PC-9 (cell line): ENCODE measurements at regions of chr1 and their contacts with region 1.

Region 1: DNA sequence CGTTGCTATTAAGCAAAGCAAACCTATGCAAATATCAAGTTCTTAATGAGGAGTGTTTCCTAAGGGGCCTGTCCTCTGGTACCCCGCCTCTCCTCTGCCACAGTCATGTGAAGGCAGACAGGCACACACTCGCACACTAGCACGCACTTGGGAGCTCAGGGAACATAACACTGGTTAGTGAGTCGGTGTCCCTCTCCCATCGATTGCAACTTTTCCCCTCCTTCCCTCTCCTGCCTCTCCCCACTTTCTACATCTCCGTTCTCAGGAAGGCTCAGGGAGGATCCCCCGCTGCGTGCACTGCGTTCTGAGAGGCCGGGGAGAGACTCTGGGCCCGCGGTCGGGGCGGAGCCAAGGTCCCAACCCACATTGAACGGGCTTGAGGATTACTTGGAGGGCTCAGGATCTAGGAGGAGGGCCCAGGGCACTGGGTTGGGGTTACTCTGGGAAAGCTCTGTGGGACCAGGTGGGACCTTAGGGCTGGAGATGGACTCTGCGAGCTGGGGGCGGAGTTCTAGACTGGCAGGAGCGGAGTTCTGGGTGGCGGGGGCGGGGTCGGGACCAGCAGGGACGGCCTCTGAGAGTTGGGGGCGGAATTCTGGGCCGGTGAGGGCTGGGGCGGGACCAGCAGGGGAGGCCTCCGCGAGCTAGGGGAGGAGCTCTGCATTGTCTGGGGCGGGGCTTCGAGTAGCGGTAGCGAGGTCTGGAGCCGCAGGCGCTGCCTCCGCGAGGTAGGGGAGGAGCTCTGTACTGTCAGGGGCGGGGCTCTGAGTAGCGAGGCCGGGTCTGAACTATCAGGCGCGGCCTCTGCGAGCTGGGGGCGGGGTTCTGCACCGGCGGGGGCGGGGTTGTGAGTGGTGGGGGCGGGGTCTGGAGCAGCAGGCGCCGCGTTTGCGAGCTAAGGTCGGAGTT is 533 bp upstream of the LEPR start:
- DNase-seq: peak; percentile 88 to 99
- H3K4me3 ChIP-seq: peak overlapping the region; percentile 59
- H3K27ac ChIP-seq: peak overlapping the region; percentile 90
- H3K4me1 ChIP-seq: peaks cover 55% of the 10 kb centered on the region
- H3K27me3 ChIP-seq: no peaks in the 10 kb centered on the region
- CTCF ChIP-seq: no peak

Region 2: GRCh38 chr1:64898107-64898845 is 521.7 kb before region 1 on chr1:
- CTCF ChIA-PET with region 1: no interaction called
- POLR2A ChIA-PET with region 1: interaction called, 3 read pairs
- intact Hi-C with region 1: loop called (anchors 5 kb)
- DNase-seq: peak; percentile 86 to 99
- H3K4me3 ChIP-seq: no peak overlapping the region; the same call in 1 of the 2 replicates
- H3K27ac ChIP-seq: peak overlapping the region; percentile 95
- H3K4me1 ChIP-seq: peaks cover 46% of the 10 kb centered on the region
- H3K27me3 ChIP-seq: no peaks in the 10 kb centered on the region
- CTCF ChIP-seq: no peak

Region 3: DNA sequence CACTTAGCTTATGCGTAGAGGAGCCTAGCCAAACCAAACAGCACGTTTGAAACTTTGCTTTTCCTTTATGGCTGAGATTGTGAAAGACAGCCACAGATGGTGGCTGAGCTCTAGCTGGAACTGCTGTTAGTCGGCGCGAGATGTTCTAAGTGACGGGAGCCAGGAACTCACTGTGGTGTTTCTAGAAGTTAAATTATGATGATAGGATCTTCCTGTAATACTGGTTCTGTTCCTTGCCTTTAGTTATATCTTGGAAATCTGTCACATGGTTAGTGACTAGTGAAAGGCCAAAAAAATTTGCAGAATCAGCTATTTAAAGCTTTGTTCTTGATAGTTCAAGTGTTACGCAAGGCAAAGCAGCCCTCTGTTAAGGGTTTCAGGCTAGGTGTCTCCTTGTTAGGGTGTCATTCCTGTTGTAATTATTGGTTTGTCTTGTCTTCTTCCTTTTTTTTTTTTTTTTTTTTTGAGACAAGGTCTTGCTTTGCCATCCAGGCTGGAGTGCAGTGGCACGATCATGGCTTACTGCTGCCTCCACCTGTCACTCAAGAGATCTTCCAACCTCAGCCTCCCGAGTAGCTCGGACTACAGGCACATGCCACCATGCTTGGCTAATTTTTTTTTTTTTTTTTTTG is 249.3 kb before region 1 on chr1:
- CTCF ChIA-PET with region 1: no interaction called
- POLR2A ChIA-PET with region 1: no interaction called
- intact Hi-C with region 1: no loop called
- DNase-seq: peak; percentile 48 to 87
- H3K4me3 ChIP-seq: no peak overlapping the region
- H3K27ac ChIP-seq: peak overlapping the region; percentile 21; the same call in 1 of the 2 replicates
- H3K4me1 ChIP-seq: peaks cover 45% of the 10 kb centered on the region
- H3K27me3 ChIP-seq: no peaks in the 10 kb centered on the region
- CTCF ChIP-seq: no peak

Region 4: GRCh38 chr1:65235867-65236805 is 183.8 kb before region 1 on chr1:
- CTCF ChIA-PET with region 1: interaction called, 3 read pairs
- POLR2A ChIA-PET with region 1: interaction called, 44 read pairs
- intact Hi-C with region 1: no loop called
- DNase-seq: no peak
- H3K4me3 ChIP-seq: no peak overlapping the region
- H3K27ac ChIP-seq: no peak overlapping the region
- H3K4me1 ChIP-seq: no peaks in the 10 kb centered on the region
- H3K27me3 ChIP-seq: no peaks in the 10 kb centered on the region
- CTCF ChIP-seq: peak; percentile 87

Region 5: GRCh38 chr1:65309304-65310077 is 110.4 kb before region 1 on chr1 and contains the start of gene DNAJC6:
- CTCF ChIA-PET with region 1: interaction called, 4 read pairs
- POLR2A ChIA-PET with region 1: no interaction called
- intact Hi-C with region 1: loop called (anchors 5 kb)
- DNase-seq: peak; percentile 53 to 80
- H3K4me3 ChIP-seq: peak within 1 kb of the TSS; percentile 58
- H3K27ac ChIP-seq: no peak within 1 kb of the TSS
- H3K4me1 ChIP-seq: no peaks in the 10 kb centered on the region
- H3K27me3 ChIP-seq: no peaks in the 10 kb centered on the region
- CTCF ChIP-seq: no peak
- total RNA-seq, gene DNAJC6: 11.2 and 15.6 TPM in 2 replicates

Region 6: DNA sequence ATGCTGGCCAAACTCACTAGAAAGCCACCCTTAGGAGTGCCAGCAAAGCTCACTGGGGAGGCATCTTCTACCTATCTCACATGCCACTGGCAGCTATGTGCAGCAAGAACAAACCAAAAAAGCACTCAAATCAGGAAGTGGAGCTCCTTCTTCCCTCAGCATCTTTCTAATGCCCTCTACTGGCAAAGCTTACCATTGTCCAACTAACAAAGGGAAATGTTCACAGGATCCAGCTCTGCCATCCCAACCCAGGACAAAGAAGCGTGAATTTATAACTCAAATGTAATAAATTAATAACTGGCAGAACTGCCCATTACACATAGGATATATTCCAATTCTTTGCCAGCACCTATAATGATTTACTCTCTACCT is 39.4 kb after region 1 on chr1:
- CTCF ChIA-PET with region 1: interaction called, 9 read pairs
- POLR2A ChIA-PET with region 1: interaction called, 4 read pairs
- intact Hi-C with region 1: loop called (anchors 2 kb)
- DNase-seq: peak in 1 of 2 experiments; percentile 18
- H3K4me3 ChIP-seq: no peak overlapping the region
- H3K27ac ChIP-seq: no peak overlapping the region
- H3K4me1 ChIP-seq: no peaks in the 10 kb centered on the region
- H3K27me3 ChIP-seq: no peaks in the 10 kb centered on the region
- CTCF ChIP-seq: peak; percentile 62

Region 7: DNA sequence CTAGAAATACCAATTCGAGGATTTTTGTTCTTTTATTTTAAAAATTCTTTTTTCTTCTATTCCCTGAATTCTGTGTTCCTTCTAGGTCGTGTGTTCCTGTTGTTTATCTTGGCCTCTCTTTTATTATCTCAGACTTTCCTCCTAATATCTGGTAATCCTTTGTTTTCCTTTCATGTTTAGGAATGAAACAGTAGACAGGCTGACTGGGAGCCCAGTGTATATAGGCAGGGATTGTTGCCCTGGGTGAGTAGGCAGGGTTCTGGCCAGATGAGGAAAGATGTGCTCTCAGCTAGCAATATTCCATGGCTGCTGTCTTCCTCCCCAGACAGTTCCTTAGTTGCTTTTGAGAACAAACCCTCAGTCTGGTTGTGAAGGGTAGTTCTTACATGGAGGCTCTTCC is 210.9 kb after region 1 on chr1:
- CTCF ChIA-PET with region 1: no interaction called
- POLR2A ChIA-PET with region 1: no interaction called
- intact Hi-C with region 1: no loop called
- DNase-seq: no peak
- H3K4me3 ChIP-seq: no peak overlapping the region
- H3K27ac ChIP-seq: no peak overlapping the region
- H3K4me1 ChIP-seq: no peaks in the 10 kb centered on the region
- H3K27me3 ChIP-seq: no peaks in the 10 kb centered on the region
- CTCF ChIP-seq: no peak

Region 8: GRCh38 chr1:65687428-65688214 is 267.7 kb after region 1 on chr1:
- CTCF ChIA-PET with region 1: interaction called, 7 read pairs
- POLR2A ChIA-PET with region 1: interaction called, 5 read pairs
- intact Hi-C with region 1: loop called (anchors 2 kb)
- DNase-seq: peak; percentile 76 to 94
- H3K4me3 ChIP-seq: no peak overlapping the region
- H3K27ac ChIP-seq: no peak overlapping the region
- H3K4me1 ChIP-seq: 0 out of 2 replicates have a peak, but pooled peaks cover 4% of the 10 kb centered on the region
- H3K27me3 ChIP-seq: no peaks in the 10 kb centered on the region
- CTCF ChIP-seq: peak; percentile 89

Region 9: DNA sequence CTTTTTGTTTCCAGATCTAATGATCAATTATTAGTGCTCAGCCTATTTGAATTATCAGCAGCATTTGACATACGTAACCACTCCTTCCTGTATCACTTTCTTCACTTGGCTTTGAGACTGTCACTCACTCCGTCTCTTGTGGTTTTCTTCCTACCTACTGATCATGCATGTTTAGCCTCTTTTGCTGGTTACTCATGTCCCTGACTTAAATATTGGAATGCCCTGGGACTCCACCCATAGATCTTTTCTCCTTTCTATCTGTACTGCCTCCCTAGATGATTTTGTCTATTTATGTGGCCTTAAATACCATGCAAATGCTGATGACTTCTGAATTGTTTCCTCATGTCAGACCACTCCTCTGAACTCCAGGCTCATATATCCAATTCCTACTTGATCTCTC is 315.0 kb after region 1 on chr1:
- CTCF ChIA-PET with region 1: no interaction called
- POLR2A ChIA-PET with region 1: no interaction called
- intact Hi-C with region 1: no loop called
- DNase-seq: no peak
- H3K4me3 ChIP-seq: no peak overlapping the region
- H3K27ac ChIP-seq: no peak overlapping the region
- H3K4me1 ChIP-seq: no peaks in the 10 kb centered on the region
- H3K27me3 ChIP-seq: no peaks in the 10 kb centered on the region
- CTCF ChIP-seq: no peak